MCF 10A (cell line): ENCODE measurements at regions of chr18 and their contacts with region 1.

Region 1: GRCh38 chr18:10851824-10852319 is 297.5 kb downstream of the PIEZO2 start:
- DNase-seq: peak; percentile 55
- H3K4me3 Mint-ChIP-seq: no peak overlapping the region
- H3K27ac Mint-ChIP-seq: no peak overlapping the region
- H3K4me1 Mint-ChIP-seq: peaks cover 6% of the 10 kb centered on the region
- H3K27me3 Mint-ChIP-seq: no peaks in the 10 kb centered on the region
- CTCF ChIP-seq: peak; percentile 69

Region 2: DNA sequence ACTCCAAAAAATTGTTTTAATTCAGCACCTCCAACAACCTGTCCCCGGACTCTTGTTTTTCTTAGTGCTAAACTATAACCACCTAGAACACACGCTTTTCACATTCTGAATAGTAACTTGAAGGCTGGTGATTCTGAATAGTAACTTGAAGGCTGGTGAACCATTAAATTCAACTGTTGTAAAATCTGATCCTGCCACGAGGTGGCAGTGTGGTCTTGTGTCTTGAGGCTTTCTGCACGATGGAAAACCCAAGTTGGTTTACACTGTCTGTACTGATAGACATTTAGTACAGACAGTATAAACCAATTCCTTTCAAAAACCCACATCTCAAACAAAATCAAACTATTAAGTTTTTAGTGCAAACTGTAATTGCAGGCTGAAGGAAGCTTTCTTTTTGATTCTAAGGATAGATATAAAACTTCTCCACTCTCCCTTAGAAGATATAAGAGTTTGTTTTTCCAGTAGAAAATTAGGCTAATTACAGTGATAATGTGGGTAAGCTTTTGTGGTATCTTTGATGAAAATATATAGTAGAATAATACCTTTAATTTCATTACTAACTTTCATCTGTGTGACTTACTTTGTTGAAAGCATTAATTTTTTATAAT is 880.5 kb before region 1 on chr18:
- CTCF ChIA-PET with region 1: no interaction called
- POLR2A ChIA-PET with region 1: no interaction called
- intact Hi-C with region 1: loop called (anchors 1 kb)
- DNase-seq: peak; percentile 82
- H3K4me3 Mint-ChIP-seq: no peak overlapping the region
- H3K27ac Mint-ChIP-seq: no peak overlapping the region
- H3K4me1 Mint-ChIP-seq: no peaks in the 10 kb centered on the region
- H3K27me3 Mint-ChIP-seq: no peaks in the 10 kb centered on the region
- CTCF ChIP-seq: peak; percentile 65

Region 3: DNA sequence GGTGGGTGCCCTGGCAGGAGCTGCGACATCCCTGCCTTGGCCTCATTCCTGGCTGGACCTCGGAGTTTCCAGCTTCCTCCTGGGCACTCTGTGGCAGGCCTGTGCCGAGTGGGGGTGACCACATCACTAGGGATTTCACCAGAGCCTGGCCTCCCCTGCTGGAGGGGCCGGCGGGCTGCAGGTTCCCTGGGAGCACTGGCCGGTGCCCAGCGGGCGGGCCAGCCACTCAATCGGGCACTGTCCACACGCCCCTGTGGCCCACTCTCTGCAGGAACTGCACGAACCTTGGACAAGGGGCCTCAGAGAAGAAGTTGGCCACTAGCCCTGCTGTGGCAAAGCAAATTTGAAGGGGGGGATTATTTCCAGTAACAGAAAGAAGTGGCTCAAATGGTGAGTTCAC is 508.1 kb before region 1 on chr18:
- CTCF ChIA-PET with region 1: no interaction called
- POLR2A ChIA-PET with region 1: no interaction called
- intact Hi-C with region 1: no loop called
- DNase-seq: no peak
- H3K4me3 Mint-ChIP-seq: no peak overlapping the region
- H3K27ac Mint-ChIP-seq: no peak overlapping the region
- H3K4me1 Mint-ChIP-seq: no peaks in the 10 kb centered on the region
- H3K27me3 Mint-ChIP-seq: no peaks in the 10 kb centered on the region
- CTCF ChIP-seq: no peak

Region 4: GRCh38 chr18:11034884-11035283 is 183.0 kb after region 1 on chr18:
- CTCF ChIA-PET with region 1: interaction called, 137 read pairs
- POLR2A ChIA-PET with region 1: interaction called, 11 read pairs
- intact Hi-C with region 1: loop called (anchors 1 kb)
- DNase-seq: peak; percentile 5
- H3K4me3 Mint-ChIP-seq: no peak overlapping the region
- H3K27ac Mint-ChIP-seq: no peak overlapping the region
- H3K4me1 Mint-ChIP-seq: peaks cover 10% of the 10 kb centered on the region
- H3K27me3 Mint-ChIP-seq: no peaks in the 10 kb centered on the region
- CTCF ChIP-seq: no peak

Region 5: DNA sequence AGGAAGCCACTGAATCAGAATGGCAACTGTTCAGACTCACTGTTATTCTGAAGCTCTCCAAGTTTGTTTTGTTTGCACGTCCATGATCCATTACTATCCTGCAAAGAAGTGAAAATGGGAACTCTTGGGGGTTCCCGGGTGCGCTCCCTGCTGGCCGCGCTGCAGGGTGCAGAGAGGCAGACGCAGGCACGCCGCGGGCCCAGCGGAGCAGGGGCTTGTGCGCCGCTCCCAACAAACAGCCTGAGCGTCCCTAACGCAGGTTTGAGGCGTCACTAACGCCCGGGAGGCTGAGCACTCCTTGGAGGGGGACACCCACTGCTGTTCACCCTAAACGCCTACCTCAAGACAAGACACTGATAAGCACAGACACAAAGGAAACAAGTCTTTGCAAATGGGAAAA is 311.8 kb after region 1 on chr18:
- CTCF ChIA-PET with region 1: interaction called, 16 read pairs
- POLR2A ChIA-PET with region 1: interaction called, 3 read pairs
- intact Hi-C with region 1: no loop called
- DNase-seq: no peak
- H3K4me3 Mint-ChIP-seq: no peak overlapping the region
- H3K27ac Mint-ChIP-seq: no peak overlapping the region
- H3K4me1 Mint-ChIP-seq: no peaks in the 10 kb centered on the region
- H3K27me3 Mint-ChIP-seq: peaks cover 13% of the 10 kb centered on the region
- CTCF ChIP-seq: no peak

Region 6: GRCh38 chr18:11553098-11553940 is 701.4 kb after region 1 on chr18:
- CTCF ChIA-PET with region 1: interaction called, 4 read pairs
- POLR2A ChIA-PET with region 1: no interaction called
- intact Hi-C with region 1: loop called (anchors 10 kb)
- DNase-seq: peak; percentile 65
- H3K4me3 Mint-ChIP-seq: no peak overlapping the region
- H3K27ac Mint-ChIP-seq: no peak overlapping the region
- H3K4me1 Mint-ChIP-seq: no peaks in the 10 kb centered on the region
- H3K27me3 Mint-ChIP-seq: peaks cover 24% of the 10 kb centered on the region
- CTCF ChIP-seq: peak; percentile 80